Common myeloid progenitor, CD34-positive (primary cell): ENCODE measurements at regions of chr7 and their contacts with region 1.

Region 1: GRCh38 chr7:101287032-101287431 is 34.6 kb downstream of the IFT22 start:
- DNase-seq: no peak
- H3K4me3 ChIP-seq: no peak overlapping the region
- H3K27ac ChIP-seq: no peak overlapping the region
- H3K4me1 ChIP-seq: peaks cover 0 to 16% (median 9%) of the 10 kb centered on the region in 4 experiments
- H3K27me3 ChIP-seq: peaks cover 0 to 13% (median 4%) of the 10 kb centered on the region in 5 experiments

Region 2: DNA sequence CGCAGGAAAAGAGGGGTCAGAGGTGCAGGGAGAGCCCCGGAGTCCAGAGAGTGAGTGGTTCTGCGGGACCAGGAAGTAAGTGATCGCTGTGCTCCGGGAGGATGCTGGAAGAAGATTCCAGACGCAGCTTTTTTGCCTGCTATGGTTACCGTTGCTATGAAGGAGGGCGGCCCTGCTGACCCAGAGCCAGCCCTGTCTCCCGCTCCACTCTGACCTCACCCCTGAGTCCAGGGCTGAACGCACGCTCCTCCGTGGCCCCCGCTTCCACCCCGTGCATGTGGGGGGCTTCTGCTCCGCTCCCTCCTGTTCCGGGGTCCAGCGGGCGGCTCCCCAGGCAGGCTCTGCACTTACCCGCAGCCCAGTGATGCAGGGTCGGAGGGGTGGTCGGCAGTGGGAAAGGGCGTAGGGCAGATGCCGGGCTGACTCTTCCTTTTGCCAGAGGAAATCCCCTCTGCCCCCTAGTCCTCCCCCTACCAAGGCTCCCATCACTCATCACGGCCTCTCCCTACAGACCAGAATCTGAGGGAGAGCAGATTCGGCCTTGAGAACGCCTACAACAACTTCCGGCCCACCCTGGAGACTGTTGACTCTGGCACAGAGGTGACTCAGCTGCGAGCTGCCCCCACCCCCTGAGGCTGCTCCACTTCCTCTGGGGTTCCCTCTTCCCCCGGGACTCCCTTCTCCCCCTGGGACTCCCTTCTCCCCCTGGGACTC is 269.8 kb before region 1 on chr7:
- CTCF ChIA-PET with region 1: no interaction called
- POLR2A ChIA-PET with region 1: no interaction called
- DNase-seq: peak; percentile 75 to 91 (median 88)
- H3K4me3 ChIP-seq: peak overlapping the region; percentile 13 to 77 (median 55)
- H3K27ac ChIP-seq: no peak overlapping the region
- H3K4me1 ChIP-seq: peaks cover 0 to 12% (median 11%) of the 10 kb centered on the region in 4 experiments
- H3K27me3 ChIP-seq: peaks cover 0 to 47% (median 11%) of the 10 kb centered on the region in 5 experiments

Region 3: DNA sequence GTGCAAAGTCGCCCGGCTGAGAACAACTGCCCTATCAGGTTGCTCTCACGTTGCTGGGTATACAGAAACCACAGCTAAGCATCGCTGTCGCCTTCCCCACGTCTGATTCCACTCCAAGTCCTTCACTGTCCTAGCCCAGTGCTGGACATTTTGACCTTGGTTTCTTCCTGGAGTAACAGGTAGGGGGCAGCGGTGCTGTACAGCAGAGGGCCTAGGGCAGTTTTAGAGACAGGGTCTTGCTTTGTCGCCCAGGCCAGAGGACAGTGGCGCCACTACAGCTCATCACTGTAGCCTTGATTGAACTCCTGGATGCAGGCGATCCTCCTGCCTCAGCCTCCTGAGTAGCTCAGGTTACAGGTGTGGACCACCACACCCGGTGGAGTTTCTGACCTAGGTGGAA is 52.0 kb before region 1 on chr7:
- CTCF ChIA-PET with region 1: interaction called, 35 read pairs
- POLR2A ChIA-PET with region 1: interaction called, 3 read pairs
- DNase-seq: peak in 2 of 3 donors; percentile 35 to 44
- H3K4me3 ChIP-seq: peak overlapping the region in 3 of 7 experiments; percentile 77 to 80 (median 79)
- H3K27ac ChIP-seq: no peak overlapping the region
- H3K4me1 ChIP-seq: peaks cover 2 to 57% (median 53%) of the 10 kb centered on the region in 4 experiments
- H3K27me3 ChIP-seq: no peaks in the 10 kb centered on the region

Region 4: GRCh38 chr7:101244375-101245146 is 42.5 kb before region 1 on chr7 and contains the start of gene FIS1:
- CTCF ChIA-PET with region 1: interaction called, 10 read pairs
- POLR2A ChIA-PET with region 1: interaction called, 3 read pairs
- DNase-seq: peak; percentile 89 to 94 (median 92)
- H3K4me3 ChIP-seq: peak within 1 kb of the TSS; percentile 79 to 97 (median 92)
- H3K27ac ChIP-seq: peak within 1 kb of the TSS; percentile 79 to 90
- H3K4me1 ChIP-seq: peaks cover 0 to 52% (median 46%) of the 10 kb centered on the region in 4 experiments
- H3K27me3 ChIP-seq: no peaks in the 10 kb centered on the region

Region 5: DNA sequence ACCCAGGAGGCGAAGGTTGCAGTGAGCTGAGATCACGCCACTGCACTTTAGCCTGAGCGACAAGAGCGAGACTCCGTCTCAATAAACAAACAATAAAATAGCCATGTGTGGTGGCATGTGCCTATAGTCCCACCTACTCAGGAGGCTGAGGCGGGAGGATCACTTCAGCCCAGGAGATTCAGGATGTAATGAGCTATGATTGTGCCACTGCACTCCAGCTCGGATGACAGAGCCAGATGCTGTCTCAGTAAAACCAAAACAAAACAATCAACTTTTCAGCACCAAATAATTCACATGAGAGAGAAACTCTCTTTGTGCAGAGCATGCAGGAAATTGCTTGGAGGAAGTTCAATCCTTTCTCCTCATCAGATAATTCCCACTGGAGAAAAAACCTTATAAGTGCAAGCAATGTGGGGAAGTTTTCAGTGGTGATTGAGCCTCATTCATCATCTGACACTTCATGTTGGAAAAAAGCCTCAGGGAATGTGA is 28.7 kb before region 1 on chr7:
- CTCF ChIA-PET with region 1: interaction called, 19 read pairs
- POLR2A ChIA-PET with region 1: no interaction called
- DNase-seq: no peak
- H3K4me3 ChIP-seq: no peak overlapping the region
- H3K27ac ChIP-seq: no peak overlapping the region
- H3K4me1 ChIP-seq: no peaks in the 10 kb centered on the region
- H3K27me3 ChIP-seq: no peaks in the 10 kb centered on the region

Region 6: GRCh38 chr7:101347477-101347876 is 60.4 kb after region 1 on chr7:
- CTCF ChIA-PET with region 1: no interaction called
- POLR2A ChIA-PET with region 1: no interaction called
- DNase-seq: no peak
- H3K4me3 ChIP-seq: no peak overlapping the region
- H3K27ac ChIP-seq: no peak overlapping the region
- H3K4me1 ChIP-seq: no peaks in the 10 kb centered on the region
- H3K27me3 ChIP-seq: peaks cover 0 to 4% (median 0%) of the 10 kb centered on the region in 5 experiments

Region 7: DNA sequence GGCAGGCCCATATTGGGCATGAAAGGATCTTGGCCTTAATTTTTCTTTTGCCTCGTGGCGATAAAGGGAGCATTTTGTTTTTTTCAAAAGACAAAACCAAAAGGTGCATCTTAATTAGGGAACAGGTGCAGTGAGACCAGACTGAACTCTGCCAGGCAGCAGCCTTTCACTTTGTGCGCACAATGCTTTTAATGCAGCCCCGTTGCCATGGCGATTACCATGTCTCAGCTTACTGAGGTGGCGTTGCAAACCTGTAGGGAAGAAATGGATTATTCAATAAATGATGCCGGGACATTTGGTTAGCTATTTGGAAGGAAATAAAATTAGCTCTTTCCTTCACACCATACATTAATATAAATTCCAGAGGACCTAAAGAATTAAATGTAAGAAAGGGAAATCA is 280.2 kb after region 1 on chr7:
- CTCF ChIA-PET with region 1: no interaction called
- POLR2A ChIA-PET with region 1: no interaction called
- DNase-seq: peak in 1 of 3 donors; percentile 54
- H3K4me3 ChIP-seq: no peak overlapping the region
- H3K27ac ChIP-seq: no peak overlapping the region
- H3K4me1 ChIP-seq: peaks cover 0 to 23% (median 19%) of the 10 kb centered on the region in 4 experiments
- H3K27me3 ChIP-seq: no peaks in the 10 kb centered on the region

Region 8: DNA sequence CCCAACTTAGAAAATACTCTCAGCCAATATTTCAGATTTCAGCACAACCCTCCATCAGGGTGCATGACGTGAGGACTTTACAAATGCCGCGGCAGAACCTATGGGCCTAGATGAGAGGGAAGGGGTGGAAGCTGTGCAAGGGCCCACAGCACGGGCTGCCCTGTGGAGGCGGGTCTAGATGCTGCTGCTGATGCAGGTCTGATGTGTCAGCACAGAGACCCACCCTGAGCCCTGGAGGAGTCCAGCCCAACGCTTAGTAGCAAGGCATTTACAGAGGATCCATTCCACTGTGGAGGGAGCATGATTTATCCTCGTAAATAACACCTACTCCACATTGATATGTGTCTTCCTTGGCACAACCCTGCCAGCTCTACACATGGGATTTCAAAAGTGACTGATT is 293.5 kb after region 1 on chr7:
- CTCF ChIA-PET with region 1: no interaction called
- POLR2A ChIA-PET with region 1: no interaction called
- DNase-seq: no peak
- H3K4me3 ChIP-seq: no peak overlapping the region
- H3K27ac ChIP-seq: no peak overlapping the region
- H3K4me1 ChIP-seq: peaks cover 0 to 6% (median 1%) of the 10 kb centered on the region in 4 experiments
- H3K27me3 ChIP-seq: no peaks in the 10 kb centered on the region